PC-9 (cell line): ENCODE measurements at regions of chr6 and their contacts with region 1.

Region 1: GRCh38 chr6:38603966-38604365 is 35.8 kb downstream of the BTBD9 start:
- DNase-seq: no peak
- H3K4me3 ChIP-seq: no peak overlapping the region
- H3K27ac ChIP-seq: no peak overlapping the region
- H3K4me1 ChIP-seq: no peaks in the 10 kb centered on the region
- H3K27me3 ChIP-seq: no peaks in the 10 kb centered on the region
- CTCF ChIP-seq: no peak

Region 2: GRCh38 chr6:37653933-37654565 is 949.9 kb before region 1 on chr6:
- CTCF ChIA-PET with region 1: interaction called, 11 read pairs
- POLR2A ChIA-PET with region 1: no interaction called
- intact Hi-C with region 1: no loop called
- DNase-seq: no peak
- H3K4me3 ChIP-seq: no peak overlapping the region
- H3K27ac ChIP-seq: no peak overlapping the region
- H3K4me1 ChIP-seq: peaks cover 16% of the 10 kb centered on the region
- H3K27me3 ChIP-seq: no peaks in the 10 kb centered on the region
- CTCF ChIP-seq: peak; percentile 94

Region 3: GRCh38 chr6:38617856-38618255 is 13.9 kb after region 1 on chr6:
- CTCF ChIA-PET with region 1: no interaction called
- POLR2A ChIA-PET with region 1: no interaction called
- intact Hi-C with region 1: no loop called
- DNase-seq: no peak
- H3K4me3 ChIP-seq: no peak overlapping the region
- H3K27ac ChIP-seq: no peak overlapping the region
- H3K4me1 ChIP-seq: no peaks in the 10 kb centered on the region
- H3K27me3 ChIP-seq: no peaks in the 10 kb centered on the region
- CTCF ChIP-seq: no peak

Region 4: GRCh38 chr6:39923414-39923813 is 1319.4 kb after region 1 on chr6:
- CTCF ChIA-PET with region 1: no interaction called
- POLR2A ChIA-PET with region 1: no interaction called
- intact Hi-C with region 1: no loop called
- DNase-seq: peak in 1 of 2 experiments; percentile 2
- H3K4me3 ChIP-seq: no peak overlapping the region
- H3K27ac ChIP-seq: no peak overlapping the region
- H3K4me1 ChIP-seq: no peaks in the 10 kb centered on the region
- H3K27me3 ChIP-seq: peaks cover 57% of the 10 kb centered on the region
- CTCF ChIP-seq: no peak